Activated CD8-positive, alpha-beta T cell treated with anti-CD3 and anti-CD28 coated beads, Interleukin-2, amount 10 ng/mL, durations not matched to agents 7 days and 5 days (primary cell): ENCODE measurements at regions of chr12 and their contacts with region 1.

Region 1: DNA sequence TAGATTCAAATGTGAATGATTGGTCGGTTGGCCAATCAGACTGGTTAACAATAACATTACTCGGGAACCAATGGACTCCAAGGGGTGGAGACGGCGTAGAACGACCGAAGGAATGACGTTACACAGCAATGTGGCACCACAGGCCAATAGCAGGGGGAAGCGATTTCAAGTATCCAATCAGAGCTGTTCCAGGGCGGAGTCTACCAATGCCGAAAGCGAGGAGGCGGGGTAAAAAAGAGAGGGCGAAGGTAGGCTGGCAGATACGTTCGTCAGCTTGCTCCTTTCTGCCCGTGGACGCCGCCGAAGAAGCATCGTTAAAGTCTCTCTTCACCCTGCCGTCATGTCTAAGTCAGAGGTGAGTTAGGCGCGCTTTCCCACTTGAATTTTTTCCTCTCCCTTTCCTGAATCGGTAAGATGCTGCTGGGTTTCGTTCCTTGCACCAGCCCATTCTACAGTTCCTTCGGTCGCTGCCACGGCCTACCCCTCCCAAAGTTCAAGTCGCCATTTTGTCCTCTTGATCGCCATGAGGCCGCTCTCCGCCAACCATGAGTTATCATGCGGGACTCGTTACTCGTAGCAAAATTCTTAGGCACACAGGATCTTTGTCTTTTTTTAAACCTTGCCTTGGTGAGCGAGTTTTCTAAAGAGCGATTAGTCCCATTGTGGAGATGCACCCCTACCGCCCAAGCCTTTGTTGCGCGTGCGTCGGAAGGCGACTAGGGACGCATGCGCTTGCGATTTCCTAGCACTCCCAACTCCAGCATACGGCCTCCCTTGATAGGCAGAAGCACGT is at the start of gene HNRNPA1:
- DNase-seq: peak; percentile 98
- ATAC-seq: peak; percentile 89
- H3K4me3 Mint-ChIP-seq: no peak within 1 kb of the TSS
- H3K27ac Mint-ChIP-seq: no peak within 1 kb of the TSS
- H3K4me1 Mint-ChIP-seq: peaks cover 55% of the 10 kb centered on the region
- H3K27me3 Mint-ChIP-seq: no peaks in the 10 kb centered on the region
- total RNA-seq, gene HNRNPA1: 1,520 to 1,553 TPM

Region 2: GRCh38 chr12:54251667-54252284 is 28.9 kb before region 1 on chr12:
- CTCF ChIA-PET with region 1: interaction called, 16 read pairs
- POLR2A ChIA-PET with region 1: interaction called, 5 read pairs
- DNase-seq: peak; percentile 31
- ATAC-seq: peak; percentile 53
- H3K4me3 Mint-ChIP-seq: no peak overlapping the region
- H3K27ac Mint-ChIP-seq: no peak overlapping the region
- H3K4me1 Mint-ChIP-seq: no peaks in the 10 kb centered on the region
- H3K27me3 Mint-ChIP-seq: no peaks in the 10 kb centered on the region

Region 3: DNA sequence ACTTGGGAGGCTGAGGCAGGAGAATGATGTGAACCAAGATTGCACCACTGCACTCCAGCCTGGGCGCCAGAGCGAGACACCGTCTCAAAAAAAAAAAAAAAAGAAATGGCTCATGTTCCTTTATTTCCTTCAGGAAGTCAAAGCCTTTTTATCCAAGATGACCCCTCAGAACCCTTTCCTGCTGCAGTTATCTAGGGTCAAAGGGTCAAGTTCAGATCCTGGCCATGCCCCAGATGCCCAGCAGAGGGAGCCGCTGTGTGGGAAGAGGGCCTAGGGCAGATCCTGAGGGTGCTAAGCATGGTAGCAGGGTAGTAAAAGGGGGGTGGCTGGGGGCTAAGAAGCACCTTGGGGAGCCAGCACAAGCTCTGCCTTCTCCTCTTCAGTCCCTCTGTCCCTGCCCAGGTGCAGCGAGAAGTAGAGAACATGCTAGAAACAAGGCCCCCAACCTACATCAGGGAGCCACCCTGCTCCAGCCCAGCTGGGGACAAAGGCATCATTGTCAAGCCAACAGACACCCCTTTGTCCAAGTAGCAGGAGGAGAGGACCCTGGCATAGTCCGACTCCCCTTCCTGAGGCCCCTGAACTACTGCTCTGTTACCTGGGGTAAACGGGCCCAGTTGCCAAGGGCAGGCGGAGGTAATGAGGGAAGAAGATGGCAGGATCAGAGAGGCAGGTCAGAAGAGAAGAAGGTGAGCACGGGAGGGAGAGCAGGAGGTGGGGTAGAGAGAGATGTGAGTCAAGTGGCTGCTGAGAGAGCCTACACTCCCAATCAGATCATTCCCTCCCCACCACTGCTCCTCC is 13.7 kb after region 1 on chr12:
- CTCF ChIA-PET with region 1: interaction called, 36 read pairs
- POLR2A ChIA-PET with region 1: interaction called, 40 read pairs
- DNase-seq: peak; percentile 76
- ATAC-seq: peak; percentile 58
- H3K4me3 Mint-ChIP-seq: no peak overlapping the region
- H3K27ac Mint-ChIP-seq: no peak overlapping the region
- H3K4me1 Mint-ChIP-seq: peaks cover 5% of the 10 kb centered on the region
- H3K27me3 Mint-ChIP-seq: peaks cover 18% of the 10 kb centered on the region

Region 4: GRCh38 chr12:54359033-54359761 is 78.5 kb after region 1 on chr12:
- CTCF ChIA-PET with region 1: interaction called, 12 read pairs
- POLR2A ChIA-PET with region 1: interaction called, 40 read pairs
- DNase-seq: peak; percentile 98
- ATAC-seq: peak; percentile 96
- H3K4me3 Mint-ChIP-seq: no peak overlapping the region
- H3K27ac Mint-ChIP-seq: no peak overlapping the region
- H3K4me1 Mint-ChIP-seq: peaks cover 30% of the 10 kb centered on the region
- H3K27me3 Mint-ChIP-seq: no peaks in the 10 kb centered on the region